GM23248 (cell line): ENCODE measurements at regions of chr1 and their contacts with region 1.

Region 1: DNA sequence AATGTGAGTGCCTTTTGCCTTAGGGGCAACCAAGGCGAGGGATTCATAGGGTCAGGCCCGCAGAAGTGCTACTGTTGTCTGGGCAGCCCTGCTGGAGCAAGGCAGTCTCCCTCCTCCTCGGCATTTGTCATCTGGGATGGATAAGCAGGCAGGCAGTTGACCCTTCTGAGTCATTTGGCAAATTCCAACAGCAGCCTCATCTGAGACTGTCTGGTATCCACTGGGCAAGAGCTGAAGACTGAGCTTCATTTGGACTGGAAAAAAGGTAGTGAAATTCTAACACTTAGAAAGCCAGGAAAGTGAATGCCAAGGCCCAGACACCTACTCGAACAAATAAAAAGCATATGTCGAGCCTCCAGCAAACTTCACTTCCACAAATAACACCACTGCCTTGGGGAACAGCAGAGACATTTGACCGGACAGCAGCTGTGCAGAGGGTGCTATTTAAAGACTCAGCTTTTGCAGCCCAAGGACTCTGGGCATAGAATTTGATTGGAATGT is 4.0 kb upstream of the ZBTB40 start:
- DNase-seq: peak; percentile 92
- H3K4me3 ChIP-seq: peak overlapping the region; percentile 41
- H3K27ac ChIP-seq: peak overlapping the region; percentile 66
- H3K4me1 ChIP-seq: peaks cover 15% of the 10 kb centered on the region
- H3K27me3 ChIP-seq: no peaks in the 10 kb centered on the region

Region 2: GRCh38 chr1:22001409-22001808 is 446.3 kb before region 1 on chr1 and contains the start of gene CELA3A:
- in situ Hi-C with region 1: no loop called
- DNase-seq: no peak
- H3K4me3 ChIP-seq: no peak within 1 kb of the TSS
- H3K27ac ChIP-seq: no peak within 1 kb of the TSS
- H3K4me1 ChIP-seq: no peaks in the 10 kb centered on the region
- H3K27me3 ChIP-seq: no peaks in the 10 kb centered on the region
- total RNA-seq, gene CELA3A: not detected in 2 replicates

Region 3: GRCh38 chr1:22488319-22488718 is 40.7 kb after region 1 on chr1:
- in situ Hi-C with region 1: no loop called
- DNase-seq: peak; percentile 5
- H3K4me3 ChIP-seq: no peak overlapping the region
- H3K27ac ChIP-seq: no peak overlapping the region
- H3K4me1 ChIP-seq: no peaks in the 10 kb centered on the region
- H3K27me3 ChIP-seq: no peaks in the 10 kb centered on the region

Region 4: GRCh38 chr1:22930235-22930912 is 482.7 kb after region 1 on chr1:
- in situ Hi-C with region 1: loop called (anchors 25 kb)
- DNase-seq: peak; percentile 65
- H3K4me3 ChIP-seq: no peak overlapping the region
- H3K27ac ChIP-seq: no peak overlapping the region
- H3K4me1 ChIP-seq: no peaks in the 10 kb centered on the region
- H3K27me3 ChIP-seq: peaks cover 7% of the 10 kb centered on the region; the same call in 1 of the 2 replicates